ENCODE measurements at regions of chr2 and their contacts with region 1.

Region 1: DNA sequence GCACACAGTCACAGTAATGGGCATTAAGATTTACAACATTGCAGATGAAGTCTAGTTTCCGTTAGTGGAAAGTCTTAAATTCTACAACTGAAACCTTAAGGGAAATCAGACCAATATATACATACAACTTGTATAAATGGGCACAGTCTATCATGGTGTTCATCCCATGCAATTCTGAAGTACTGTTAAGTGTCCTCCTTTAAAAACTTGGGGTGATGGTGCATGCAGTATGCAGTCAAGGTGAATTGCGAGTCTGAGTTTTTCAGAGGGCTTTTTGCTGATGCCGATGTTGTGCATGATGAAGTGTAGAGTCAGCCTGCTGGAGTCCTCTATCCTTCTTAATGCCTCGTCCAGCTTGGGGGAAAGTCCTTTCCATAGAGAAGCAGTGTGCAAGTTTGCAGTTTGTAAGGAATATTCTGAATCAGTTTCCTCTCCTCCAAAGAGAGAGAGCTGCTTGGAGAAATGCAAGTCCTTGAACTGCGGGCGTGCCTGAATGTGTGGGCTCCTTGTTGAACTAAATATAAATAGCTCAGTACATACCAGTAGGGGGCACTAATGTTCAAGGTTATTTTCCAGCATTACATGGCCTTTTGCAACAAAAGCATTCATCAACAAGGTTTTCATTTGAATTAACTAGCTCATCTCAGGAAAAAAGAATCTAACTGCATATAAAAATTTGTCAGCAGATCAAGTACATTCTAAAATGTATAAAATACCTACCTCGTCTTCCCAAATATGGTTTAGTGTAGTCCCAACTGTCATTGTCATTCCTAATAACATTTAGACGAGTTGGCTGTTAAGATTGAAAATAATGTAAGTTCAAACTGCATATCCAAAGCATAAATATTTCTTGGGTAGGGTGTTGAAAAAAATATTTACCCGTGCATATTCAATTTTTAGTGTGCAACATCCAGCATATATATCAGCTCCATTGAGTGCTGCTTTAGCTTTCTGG is 21.3 kb downstream of the HNRNPLL start:
- DNase-seq: no peak

Region 2: DNA sequence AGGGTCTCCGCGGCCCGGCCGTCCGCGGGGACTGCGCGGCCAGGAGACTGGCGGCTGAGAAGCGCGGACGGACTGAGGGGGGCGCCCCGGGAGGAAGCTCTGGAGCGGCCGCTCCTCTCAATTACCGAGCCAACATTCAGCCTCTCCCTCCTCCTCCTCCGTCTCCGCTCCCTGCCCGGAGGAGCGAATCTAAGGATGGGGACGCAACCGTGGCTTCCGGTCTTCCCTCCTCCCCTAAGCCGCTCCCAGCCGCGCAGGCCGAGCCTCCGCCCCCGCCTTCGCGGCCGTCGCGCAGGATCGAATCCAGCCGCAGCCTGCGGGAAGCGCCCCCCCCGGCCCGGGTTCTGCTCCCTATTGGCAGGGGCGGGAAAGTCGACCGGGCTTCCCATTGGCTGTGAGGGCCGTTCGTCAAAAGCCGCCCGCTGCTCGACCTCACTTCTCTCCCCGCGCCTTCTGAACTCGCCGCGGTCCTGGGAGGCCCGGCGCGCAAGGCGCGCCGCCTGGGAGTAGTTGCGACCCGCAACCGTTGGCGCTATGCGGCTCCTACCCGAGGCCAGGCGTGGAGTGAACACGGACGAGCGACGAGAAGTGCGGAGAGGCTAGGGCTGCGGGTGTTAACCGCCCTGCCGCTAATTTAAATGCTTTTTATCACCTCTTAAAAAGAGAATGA is 21.4 kb after region 1 on chr2 and contains the start of gene HNRNPLL:
- intact Hi-C with region 1: no loop called
- DNase-seq: peak; percentile 99
- total RNA-seq, gene HNRNPLL: 25.1 TPM

Region 3: GRCh38 chr2:38665854-38666555 is 84.5 kb after region 1 on chr2 and contains the start of gene GALM:
- intact Hi-C with region 1: loop called (anchors 5 kb)
- DNase-seq: peak; percentile 91
- total RNA-seq, gene GALM: 8.5 TPM

Region 4: DNA sequence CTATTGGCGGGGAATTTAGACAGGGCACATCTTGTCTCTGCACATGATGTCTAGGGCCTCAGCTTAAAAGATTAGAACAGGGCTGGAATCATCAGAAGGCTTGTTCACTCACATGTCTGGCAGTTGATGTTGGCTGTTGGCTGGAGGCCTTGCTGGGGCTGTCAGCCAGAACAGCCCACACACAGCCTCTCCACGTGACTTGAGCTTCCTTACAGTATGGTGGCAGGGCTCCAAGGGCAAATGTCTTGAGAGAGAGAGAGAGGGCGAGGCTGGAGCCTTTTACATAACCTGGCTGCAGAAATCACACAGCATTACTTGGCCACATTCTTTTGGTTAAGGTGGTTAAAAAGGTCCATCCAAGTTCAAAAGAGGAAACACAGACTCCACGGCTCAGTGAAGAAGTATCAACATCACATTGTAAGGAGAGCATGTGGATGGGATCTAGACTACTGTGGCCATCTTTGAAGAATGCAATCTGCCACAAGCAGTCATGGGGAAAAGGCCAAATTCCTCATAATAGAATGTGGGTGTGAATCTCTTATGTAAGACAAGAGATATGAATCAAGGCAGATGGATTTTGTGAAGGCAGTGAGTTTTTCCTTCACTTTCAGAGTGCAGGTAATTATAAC is 139.3 kb after region 1 on chr2:
- intact Hi-C with region 1: loop called (anchors 5 kb)
- DNase-seq: peak; percentile 80

Measured in cardiac septum (tissue), 1 donor.